ENCODE measurements at regions of chr1 and their contacts with region 1.

Region 1: GRCh38 chr1:202968840-202969295 is 1.8 kb upstream of the CYB5R1 start:
- DNase-seq: peak; percentile 40 to 55
- ATAC-seq: peak in 1 of 2 donors; percentile 26
- H3K4me3 ChIP-seq: no peak overlapping the region
- H3K27ac ChIP-seq: peak overlapping the region; percentile 98 to 100 (median 100)
- H3K4me1 ChIP-seq: peaks cover 29 to 34% of the 10 kb centered on the region in 2 donors
- H3K27me3 ChIP-seq: no peaks in the 10 kb centered on the region
- CTCF ChIP-seq: peak; percentile 37 to 66 (median 56)
- POLR2A ChIP-seq: no peak

Region 2: DNA sequence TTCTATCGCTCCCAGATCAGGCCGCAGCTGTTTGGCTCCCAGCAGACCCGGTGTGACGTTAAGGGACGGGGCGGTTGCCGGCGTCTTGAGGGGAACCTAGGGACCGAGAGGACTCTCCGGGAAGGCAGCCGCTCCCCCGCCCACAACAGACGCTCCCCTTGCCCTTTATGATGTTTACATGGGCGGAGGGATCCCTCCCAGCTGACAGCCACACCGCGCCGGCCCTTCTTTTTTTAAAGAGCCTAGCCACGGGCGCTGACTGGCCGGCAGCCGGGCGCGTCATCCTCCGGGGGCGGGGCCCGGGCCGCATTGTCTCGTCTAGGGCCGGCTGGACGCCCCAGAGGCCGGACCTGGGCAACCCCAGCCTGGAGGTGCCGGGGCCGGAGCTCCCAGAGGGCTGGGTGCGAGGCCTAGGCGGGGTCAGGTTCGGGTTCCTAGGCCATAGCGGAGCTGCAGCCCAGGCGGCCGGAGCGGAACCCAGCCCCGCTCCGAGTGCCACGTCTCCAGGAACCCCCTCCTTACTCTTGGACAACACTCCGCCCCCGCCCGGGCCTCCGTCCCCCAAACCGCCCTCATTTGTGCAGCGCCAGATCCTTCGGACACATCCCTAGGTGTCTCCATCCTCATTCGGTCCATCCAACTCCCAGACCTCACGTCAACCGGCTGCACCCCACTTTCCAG is 158.1 kb before region 1 on chr1 and contains the start of gene PCAT6:
- in situ Hi-C with region 1: no loop called
- intact Hi-C with region 1: loop called (anchors 1 kb)
- DNase-seq: peak; percentile 92 to 95
- ATAC-seq: peak; percentile 79 to 85
- H3K4me3 ChIP-seq: peak within 1 kb of the TSS; percentile 69 to 94 (median 78)
- H3K27ac ChIP-seq: peak within 1 kb of the TSS; percentile 83 to 88 (median 86)
- H3K4me1 ChIP-seq: peaks cover 15 to 17% of the 10 kb centered on the region in 2 donors
- H3K27me3 ChIP-seq: no peaks in the 10 kb centered on the region
- CTCF ChIP-seq: peak in 1 of 5 experiments; percentile 17
- POLR2A ChIP-seq: peak; percentile 73 to 94
- total RNA-seq, gene PCAT6: 4.3 TPM in 1 of 4 donors, not detected in the others

Region 3: GRCh38 chr1:202926720-202927491 is 42.0 kb before region 1 on chr1 and contains the start of gene KLHL12:
- in situ Hi-C with region 1: no loop called
- intact Hi-C with region 1: loop called (anchors 1 kb)
- DNase-seq: peak; percentile 94
- ATAC-seq: peak; percentile 94 to 97
- H3K4me3 ChIP-seq: peak within 1 kb of the TSS; percentile 75 to 100 (median 88)
- H3K27ac ChIP-seq: peak within 1 kb of the TSS; percentile 92 to 98 (median 94)
- H3K4me1 ChIP-seq: peaks cover 14 to 30% of the 10 kb centered on the region in 2 donors
- H3K27me3 ChIP-seq: no peaks in the 10 kb centered on the region
- CTCF ChIP-seq: peak; percentile 79 to 84 (median 81)
- POLR2A ChIP-seq: peak; percentile 78 to 83
- total RNA-seq, gene KLHL12: 12.1 to 24.0 (median 12.6) TPM

Region 4: GRCh38 chr1:202998836-202999750 is 30.2 kb after region 1 on chr1:
- in situ Hi-C with region 1: no loop called
- intact Hi-C with region 1: loop called (anchors 1 kb)
- DNase-seq: peak; percentile 22 to 31
- ATAC-seq: peak in 1 of 2 donors; percentile 27
- H3K4me3 ChIP-seq: no peak overlapping the region
- H3K27ac ChIP-seq: no peak overlapping the region
- H3K4me1 ChIP-seq: no peaks in the 10 kb centered on the region
- H3K27me3 ChIP-seq: peaks cover 3 to 8% (median 4%) of the 10 kb centered on the region in 3 donors
- CTCF ChIP-seq: peak; percentile 74 to 86 (median 81)
- POLR2A ChIP-seq: no peak

Region 5: DNA sequence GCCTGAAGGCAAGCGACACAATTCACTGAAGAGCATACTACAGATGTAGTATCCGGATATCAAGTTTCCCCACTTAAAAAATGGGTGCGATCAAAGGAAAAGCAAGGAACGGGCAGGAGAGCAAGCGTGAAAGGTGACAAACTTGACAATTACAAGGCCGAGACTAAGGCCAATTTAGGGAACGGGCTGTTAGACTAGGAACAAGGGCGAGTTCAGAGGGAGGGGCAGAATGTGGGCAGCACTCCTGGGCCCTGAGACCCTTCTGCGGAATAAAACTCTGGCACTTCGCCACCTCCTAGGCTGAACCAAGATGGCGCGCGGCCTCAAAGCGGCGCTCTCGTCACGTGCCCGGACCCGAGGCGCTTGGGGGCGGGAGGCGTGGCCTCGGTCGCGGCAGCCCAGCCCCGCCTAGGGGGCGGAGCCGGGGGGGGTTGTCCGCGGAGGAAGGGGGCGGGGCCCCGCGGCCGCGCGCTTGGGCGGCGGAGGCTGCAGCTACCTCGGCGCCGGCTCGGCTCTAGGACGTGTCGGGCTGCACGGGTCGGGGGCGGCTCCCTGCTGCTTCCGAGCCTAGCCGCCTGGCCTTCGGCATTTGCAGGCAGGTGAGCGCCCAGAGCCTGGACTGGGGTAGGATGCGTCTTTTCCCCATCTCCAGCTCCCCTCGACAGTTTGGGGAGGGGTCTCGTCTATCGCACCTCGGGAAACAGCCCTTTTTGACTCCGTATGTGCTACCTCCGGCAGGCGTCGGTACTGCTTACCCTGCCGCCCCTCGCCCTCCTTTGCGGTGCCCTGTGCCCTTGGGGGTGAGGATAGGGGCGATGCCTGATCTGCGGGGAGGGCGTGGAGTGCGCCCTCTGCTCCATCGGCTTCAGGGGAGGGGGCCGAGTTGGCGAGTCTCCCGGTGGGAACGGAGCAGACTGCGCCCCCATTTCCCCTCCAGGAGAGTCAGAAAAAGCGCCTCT is 57.4 kb after region 1 on chr1 and contains the start of gene PPFIA4:
- in situ Hi-C with region 1: no loop called
- intact Hi-C with region 1: loop called (anchors 2 kb)
- DNase-seq: peak; percentile 75 to 85
- ATAC-seq: peak; percentile 57 to 59
- H3K4me3 ChIP-seq: peak within 1 kb of the TSS; percentile 74 to 89 (median 85)
- H3K27ac ChIP-seq: peak within 1 kb of the TSS; percentile 89 to 98 (median 94)
- H3K4me1 ChIP-seq: peaks cover 29 to 42% of the 10 kb centered on the region in 2 donors
- H3K27me3 ChIP-seq: no peaks in the 10 kb centered on the region
- CTCF ChIP-seq: peak in 4 of 5 experiments; percentile 6 to 25 (median 10)
- POLR2A ChIP-seq: peak; percentile 90 to 95
- total RNA-seq, gene PPFIA4: 8.4 to 45.5 (median 33.1) TPM

Region 6: GRCh38 chr1:203273206-203273868 is 304.5 kb after region 1 on chr1:
- in situ Hi-C with region 1: no loop called
- intact Hi-C with region 1: loop called (anchors 2 kb)
- DNase-seq: peak; percentile 72 to 86
- ATAC-seq: peak; percentile 33 to 42
- H3K4me3 ChIP-seq: peak overlapping the region; percentile 31 to 43 (median 38)
- H3K27ac ChIP-seq: peak overlapping the region; percentile 92 to 96 (median 94)
- H3K4me1 ChIP-seq: peaks cover 82 to 83% of the 10 kb centered on the region in 2 donors
- H3K27me3 ChIP-seq: no peaks in the 10 kb centered on the region
- CTCF ChIP-seq: peak; percentile 99 to 100 (median 100)
- POLR2A ChIP-seq: peak; percentile 23 to 52

Region 7: DNA sequence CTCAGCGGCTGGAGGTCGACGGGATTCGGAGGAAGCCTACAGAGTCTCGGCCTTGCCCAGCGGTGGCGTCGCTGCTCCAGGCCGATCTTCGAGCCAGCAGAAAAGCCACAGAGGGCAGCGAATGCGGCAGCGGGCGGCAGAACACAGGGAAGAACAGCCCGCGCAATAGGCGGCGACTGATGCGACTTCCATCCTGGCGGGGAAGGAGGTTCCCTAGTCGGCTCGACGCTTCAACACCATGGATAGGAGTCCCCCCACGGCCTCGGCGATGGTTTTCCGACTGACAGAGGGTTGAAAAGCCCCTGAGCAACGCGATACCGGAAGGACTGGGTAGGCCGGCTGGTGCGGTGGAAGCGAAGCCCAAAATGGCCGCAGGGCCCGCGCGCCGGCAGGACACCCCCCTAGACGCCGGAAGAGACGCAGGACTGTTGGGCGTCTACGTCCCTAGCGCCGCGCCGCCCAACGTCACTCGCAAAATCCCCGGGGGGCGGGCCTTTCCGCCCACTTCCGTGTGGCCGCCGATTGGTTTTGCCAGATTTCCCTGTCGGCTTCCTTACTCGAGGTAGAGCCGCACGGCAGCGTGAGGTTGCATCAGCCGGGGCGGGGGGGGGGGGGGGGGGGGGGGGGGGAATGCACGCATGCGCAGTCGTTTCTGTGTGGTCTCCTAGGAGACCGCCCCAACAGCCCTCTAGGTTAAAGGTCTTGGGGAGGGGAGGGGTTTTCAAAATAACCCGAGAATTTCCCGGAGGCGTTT is 1442.8 kb after region 1 on chr1 and contains the start of gene PPP1R15B:
- in situ Hi-C with region 1: no loop called
- intact Hi-C with region 1: loop called (anchors 5 kb)
- DNase-seq: peak; percentile 95 to 98
- ATAC-seq: peak; percentile 84 to 86
- H3K4me3 ChIP-seq: peak within 1 kb of the TSS; percentile 96 to 100 (median 98)
- H3K27ac ChIP-seq: peak within 1 kb of the TSS; percentile 99 to 100 (median 100)
- H3K4me1 ChIP-seq: peaks cover 12 to 17% of the 10 kb centered on the region in 2 donors
- H3K27me3 ChIP-seq: no peaks in the 10 kb centered on the region
- CTCF ChIP-seq: no peak
- POLR2A ChIP-seq: peak; percentile 95 to 98
- total RNA-seq, gene PPP1R15B: 23.8 to 33.0 (median 25.9) TPM